Breast epithelium (tissue), 4 donors: ENCODE measurements at regions of chr14 and their contacts with region 1.

Region 1: GRCh38 chr14:71753126-71753830 is 179.0 kb upstream of the RGS6 start:
- DNase-seq: peak; percentile 75 to 79
- H3K4me3 ChIP-seq: peak overlapping the region in 2 of 3 donors; percentile 23 to 36
- H3K27ac ChIP-seq: no peak overlapping the region
- H3K4me1 ChIP-seq: peaks cover 0 to 7% of the 10 kb centered on the region in 2 donors
- H3K27me3 ChIP-seq: no peaks in the 10 kb centered on the region
- CTCF ChIP-seq: peak; percentile 54 to 92 (median 92)
- POLR2A ChIP-seq: no peak

Region 2: GRCh38 chr14:71130491-71131179 is 622.6 kb before region 1 on chr14:
- intact Hi-C with region 1: loop called (anchors 5 kb)
- DNase-seq: no peak
- H3K4me3 ChIP-seq: no peak overlapping the region
- H3K27ac ChIP-seq: no peak overlapping the region
- H3K4me1 ChIP-seq: no peaks in the 10 kb centered on the region
- H3K27me3 ChIP-seq: no peaks in the 10 kb centered on the region
- CTCF ChIP-seq: no peak
- POLR2A ChIP-seq: no peak

Region 3: GRCh38 chr14:71720978-71721624 is 32.2 kb before region 1 on chr14:
- intact Hi-C with region 1: no loop called
- DNase-seq: no peak
- H3K4me3 ChIP-seq: no peak overlapping the region
- H3K27ac ChIP-seq: no peak overlapping the region
- H3K4me1 ChIP-seq: peaks cover 0 to 6% of the 10 kb centered on the region in 2 donors
- H3K27me3 ChIP-seq: no peaks in the 10 kb centered on the region
- CTCF ChIP-seq: peak in 1 of 3 donors; percentile 17
- POLR2A ChIP-seq: no peak

Region 4: DNA sequence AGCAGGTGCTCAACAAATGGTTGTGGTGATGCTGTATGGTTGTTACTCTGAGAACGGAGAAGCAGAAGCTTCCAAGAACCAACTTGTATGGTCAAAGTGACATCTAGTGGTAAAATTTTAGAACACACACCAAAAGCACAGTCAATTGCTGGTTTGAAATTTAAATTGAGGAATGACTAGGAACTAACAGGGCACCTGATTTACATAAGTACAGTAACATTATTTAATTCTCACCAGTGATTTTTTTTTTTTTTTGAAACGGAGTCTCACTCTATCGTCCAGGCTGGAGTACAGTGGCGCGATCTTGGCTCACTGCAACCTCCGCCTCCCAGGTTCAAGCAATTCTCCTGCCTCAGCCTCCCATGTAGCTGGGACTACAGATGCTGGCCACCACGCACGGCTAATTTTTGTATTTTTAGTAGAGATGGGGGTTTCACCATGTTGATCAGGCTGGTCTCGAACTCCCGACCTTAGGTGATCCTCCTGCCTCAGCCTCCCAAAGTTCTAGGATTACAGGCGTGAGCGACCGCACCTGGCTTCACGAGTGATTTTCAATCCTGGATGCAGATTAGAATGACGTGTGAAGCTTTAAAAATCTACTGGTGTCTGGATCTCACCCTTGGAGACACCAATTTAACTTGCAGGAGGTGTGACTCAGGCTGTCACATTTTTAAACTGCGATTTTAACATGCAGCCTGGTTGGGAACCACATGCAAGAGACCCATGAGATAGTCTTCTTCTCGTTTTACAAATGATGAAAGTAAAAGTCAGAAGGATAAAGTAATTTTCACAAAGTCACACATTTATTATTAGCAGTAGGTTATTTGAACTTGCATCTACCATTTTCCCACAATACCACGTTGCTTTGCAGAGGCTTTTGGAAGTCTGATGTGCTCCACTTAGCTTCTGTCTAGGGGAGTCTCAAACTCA is 1719.2 kb after region 1 on chr14:
- intact Hi-C with region 1: no loop called
- DNase-seq: no peak
- H3K4me3 ChIP-seq: no peak overlapping the region
- H3K27ac ChIP-seq: no peak overlapping the region
- H3K4me1 ChIP-seq: no peaks in the 10 kb centered on the region
- H3K27me3 ChIP-seq: no peaks in the 10 kb centered on the region
- CTCF ChIP-seq: peak; percentile 65 to 78 (median 74)
- POLR2A ChIP-seq: no peak